T-cell (primary cell): ENCODE measurements at regions of chr7 and their contacts with region 1.

Region 1: DNA sequence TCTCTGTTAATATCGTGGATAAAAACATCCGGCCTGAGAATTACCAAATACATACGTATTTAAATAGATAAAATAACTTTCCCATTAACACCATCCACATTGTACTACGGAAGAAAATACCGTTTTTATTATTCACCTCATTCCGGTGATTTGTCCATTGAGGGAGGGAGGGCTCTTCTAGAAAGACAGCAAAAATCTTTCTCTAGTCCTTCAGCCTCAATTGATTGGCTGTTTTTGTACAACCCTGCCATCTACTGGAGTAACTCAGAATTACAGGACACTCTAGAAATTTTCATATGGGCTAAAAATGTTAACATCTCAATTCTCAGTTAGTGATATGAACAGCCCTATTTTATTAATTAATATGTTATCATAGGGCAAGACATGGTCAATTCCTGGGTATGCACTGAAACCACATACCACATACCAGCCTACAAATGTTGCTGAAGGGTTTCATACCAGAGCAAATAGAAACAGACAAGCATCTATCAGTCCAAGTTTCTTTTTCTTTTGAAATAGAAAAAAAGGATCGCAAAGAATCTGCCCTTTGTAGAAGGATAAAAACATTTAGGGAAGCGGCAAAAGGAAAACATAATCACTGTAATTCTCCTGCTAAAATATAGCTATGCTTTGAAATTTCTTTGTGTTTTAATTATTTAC is 55.8 kb upstream of the CDCA7L start:
- DNase-seq: peak in 6 of 35 experiments; percentile 3 to 71 (median 17)
- ATAC-seq: peak; percentile 55 to 64 (median 58)
- H3K4me3 ChIP-seq: no peak overlapping the region
- H3K4me3 Mint-ChIP-seq: no peak overlapping the region
- H3K27ac ChIP-seq: no peak overlapping the region
- H3K27ac Mint-ChIP-seq: no peak overlapping the region
- H3K4me1 ChIP-seq: peaks cover 0 to 2% of the 10 kb centered on the region in 2 experiments
- H3K4me1 Mint-ChIP-seq: peaks cover 0 to 4% (median 2%) of the 10 kb centered on the region in 3 donors
- H3K27me3 ChIP-seq: no peaks in the 10 kb centered on the region
- H3K27me3 Mint-ChIP-seq: peaks cover 0 to 14% of the 10 kb centered on the region in 2 donors

Region 2: GRCh38 chr7:21086688-21087087 is 914.8 kb before region 1 on chr7:
- CTCF ChIA-PET with region 1: interaction called in 1 of 2 experiments, 10 read pairs
- POLR2A ChIA-PET with region 1: no interaction called
- DNase-seq: no peak
- ATAC-seq: no peak
- H3K4me3 ChIP-seq: no peak overlapping the region
- H3K4me3 Mint-ChIP-seq: no peak overlapping the region
- H3K27ac ChIP-seq: no peak overlapping the region
- H3K27ac Mint-ChIP-seq: no peak overlapping the region
- H3K4me1 ChIP-seq: no peaks in the 10 kb centered on the region
- H3K4me1 Mint-ChIP-seq: no peaks in the 10 kb centered on the region
- H3K27me3 ChIP-seq: no peaks in the 10 kb centered on the region
- H3K27me3 Mint-ChIP-seq: peaks cover 2 to 3% of the 10 kb centered on the region in 2 donors